ENCODE measurements at regions of chr2 and their contacts with region 1.

Region 1: GRCh38 chr2:238263204-238264071 is 23.6 kb upstream of the HES6 start:
- DNase-seq: peak; percentile 73 to 83
- ATAC-seq: peak; percentile 70 to 77 (median 74)
- H3K4me3 ChIP-seq: no peak overlapping the region
- H3K4me3 Mint-ChIP-seq: no peak overlapping the region
- H3K27ac ChIP-seq: no peak overlapping the region
- H3K27ac Mint-ChIP-seq: no peak overlapping the region
- H3K4me1 ChIP-seq: peaks cover 3% of the 10 kb centered on the region
- H3K4me1 Mint-ChIP-seq: peaks cover 4 to 7% of the 10 kb centered on the region in 2 donors
- H3K27me3 ChIP-seq: no peaks in the 10 kb centered on the region
- H3K27me3 Mint-ChIP-seq: no peaks in the 10 kb centered on the region
- CTCF ChIP-seq: peak; percentile 79

Region 2: GRCh38 chr2:238160206-238161109 is 103.0 kb before region 1 on chr2:
- intact Hi-C with region 1: loop called (anchors 1 kb)
- DNase-seq: peak in 1 of 2 donors; percentile 36
- ATAC-seq: peak; percentile 20 to 51 (median 33)
- H3K4me3 ChIP-seq: no peak overlapping the region
- H3K4me3 Mint-ChIP-seq: peak overlapping the region; percentile 53
- H3K27ac ChIP-seq: no peak overlapping the region
- H3K27ac Mint-ChIP-seq: peak overlapping the region; percentile 38 to 57
- H3K4me1 ChIP-seq: peaks cover 22% of the 10 kb centered on the region
- H3K4me1 Mint-ChIP-seq: peaks cover 7 to 21% of the 10 kb centered on the region in 2 donors
- H3K27me3 ChIP-seq: peaks cover 11% of the 10 kb centered on the region
- H3K27me3 Mint-ChIP-seq: peaks cover 0 to 12% of the 10 kb centered on the region in 2 donors
- CTCF ChIP-seq: peak; percentile 14

Measured in natural killer cell (primary cell).